ENCODE measurements at regions of chr14 and their contacts with region 1.

Region 1: DNA sequence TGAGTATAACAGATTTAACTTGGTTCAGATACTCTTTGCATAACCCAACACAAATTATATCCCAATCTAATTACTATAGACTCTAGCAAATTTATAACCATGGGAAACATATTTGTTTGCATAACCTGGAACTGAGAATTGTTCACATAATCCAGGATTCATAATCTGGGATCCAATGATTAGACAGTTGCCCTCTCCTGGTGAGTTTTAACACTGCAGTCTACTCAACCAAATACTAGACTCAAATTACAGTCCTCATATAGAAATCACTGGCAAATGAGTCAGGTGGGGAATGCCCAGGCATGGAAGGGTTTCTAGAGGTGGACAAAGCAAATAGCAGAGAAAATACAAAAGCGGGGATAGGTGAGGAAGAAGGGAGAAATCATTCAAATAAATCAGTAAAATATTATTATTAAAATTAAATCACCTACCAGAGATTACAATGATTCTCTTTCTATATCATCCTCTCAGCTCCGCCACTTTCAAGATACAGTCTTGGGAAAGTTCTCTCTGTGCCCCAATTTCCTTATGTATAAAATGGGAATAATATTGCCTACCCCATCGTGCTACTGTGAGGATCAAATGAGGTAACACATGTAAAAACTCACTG is 9.4 kb downstream of the GCH1 start:
- DNase-seq: no peak
- H3K4me3 ChIP-seq: no peak overlapping the region
- H3K27ac ChIP-seq: no peak overlapping the region
- H3K4me1 ChIP-seq: no peaks in the 10 kb centered on the region
- H3K27me3 ChIP-seq: no peaks in the 10 kb centered on the region
- CTCF ChIP-seq: peak; percentile 22 to 78 (median 62)

Region 2: DNA sequence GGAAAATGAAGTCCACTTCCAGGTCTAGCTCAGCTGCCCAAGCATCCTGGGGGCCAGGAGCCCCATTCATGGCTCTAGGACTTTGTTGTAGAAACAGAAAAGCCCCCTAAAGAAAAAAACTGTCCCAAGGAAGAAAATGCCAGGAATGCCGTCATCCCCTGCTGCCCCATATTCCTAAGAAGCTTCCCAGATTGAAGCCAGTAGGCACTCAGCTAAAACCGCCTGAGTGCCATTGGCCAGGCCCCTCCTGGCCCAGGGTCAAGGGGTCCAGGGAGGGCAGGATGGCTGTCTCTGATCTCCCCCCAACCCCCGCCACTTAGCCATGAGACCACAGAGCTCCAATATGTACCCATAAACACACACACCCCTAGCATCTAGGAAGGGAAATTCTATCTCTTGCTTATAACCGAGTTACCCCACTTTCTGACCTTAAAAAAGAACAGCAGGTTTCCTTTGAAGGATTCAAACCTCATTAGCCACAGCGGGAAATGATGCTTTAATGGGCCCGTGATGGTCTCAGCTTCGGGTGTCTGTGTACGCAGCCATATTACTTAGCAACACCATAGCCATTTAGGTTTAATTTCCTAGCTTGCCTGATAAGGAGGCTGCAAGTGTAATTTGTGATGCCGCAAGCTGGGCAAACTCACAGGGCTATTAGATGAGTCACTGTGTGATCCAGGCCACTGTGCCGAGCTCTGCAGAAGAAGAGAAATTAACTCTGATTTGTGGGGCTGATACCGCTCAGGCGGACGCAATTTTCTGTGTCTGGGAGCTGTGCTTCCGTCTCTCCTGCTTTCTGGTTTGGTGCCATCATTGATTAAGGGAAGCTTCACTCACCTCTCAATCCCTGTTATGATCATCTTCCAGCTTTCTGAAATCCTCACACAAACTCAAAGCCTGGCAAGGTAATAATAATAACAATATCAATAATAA is 74.8 kb before region 1 on chr14:
- intact Hi-C with region 1: loop called (anchors 10 kb)
- DNase-seq: no peak
- H3K4me3 ChIP-seq: no peak overlapping the region
- H3K27ac ChIP-seq: no peak overlapping the region
- H3K4me1 ChIP-seq: no peaks in the 10 kb centered on the region
- H3K27me3 ChIP-seq: no peaks in the 10 kb centered on the region
- CTCF ChIP-seq: no peak